ENCODE measurements at regions of chr9 and their contacts with region 1.

Region 1: DNA sequence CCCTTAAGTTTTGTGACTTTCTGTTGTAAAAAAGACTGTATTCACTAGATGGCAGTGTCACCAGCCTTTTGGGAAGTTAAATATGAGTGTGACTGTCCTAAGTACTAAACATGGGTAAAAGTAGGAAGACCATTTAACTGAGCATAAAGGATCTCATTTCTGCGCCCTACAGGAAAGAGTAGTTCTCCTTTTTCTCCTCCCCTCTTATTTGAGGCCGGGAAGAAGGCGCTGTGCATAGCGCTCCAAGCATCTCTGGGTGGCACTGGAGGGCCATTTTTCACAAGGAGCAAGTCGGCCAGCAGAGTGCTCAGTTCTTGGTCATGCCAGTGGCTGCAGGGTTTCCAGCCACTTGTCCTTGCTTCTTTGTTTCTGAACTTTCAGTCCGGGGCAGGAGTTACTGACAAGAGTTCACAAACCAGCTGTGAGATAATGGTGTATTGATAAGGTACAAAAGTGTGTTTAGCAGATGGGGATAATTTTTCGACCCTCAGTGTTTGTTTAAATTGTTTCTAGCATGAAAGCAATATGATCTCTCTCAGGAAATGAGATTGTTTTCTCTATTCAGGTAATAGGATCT is 227.6 kb upstream of the DMRT1 start:
- DNase-seq: peak; percentile 55 to 94
- H3K4me3 ChIP-seq: no peak overlapping the region
- H3K27ac ChIP-seq: peak overlapping the region; percentile 86 to 88
- H3K4me1 ChIP-seq: peaks cover 10 to 25% of the 10 kb centered on the region in 2 donors
- H3K27me3 ChIP-seq: no peaks in the 10 kb centered on the region
- CTCF ChIP-seq: peak; percentile 79 to 88 (median 82)

Region 2: DNA sequence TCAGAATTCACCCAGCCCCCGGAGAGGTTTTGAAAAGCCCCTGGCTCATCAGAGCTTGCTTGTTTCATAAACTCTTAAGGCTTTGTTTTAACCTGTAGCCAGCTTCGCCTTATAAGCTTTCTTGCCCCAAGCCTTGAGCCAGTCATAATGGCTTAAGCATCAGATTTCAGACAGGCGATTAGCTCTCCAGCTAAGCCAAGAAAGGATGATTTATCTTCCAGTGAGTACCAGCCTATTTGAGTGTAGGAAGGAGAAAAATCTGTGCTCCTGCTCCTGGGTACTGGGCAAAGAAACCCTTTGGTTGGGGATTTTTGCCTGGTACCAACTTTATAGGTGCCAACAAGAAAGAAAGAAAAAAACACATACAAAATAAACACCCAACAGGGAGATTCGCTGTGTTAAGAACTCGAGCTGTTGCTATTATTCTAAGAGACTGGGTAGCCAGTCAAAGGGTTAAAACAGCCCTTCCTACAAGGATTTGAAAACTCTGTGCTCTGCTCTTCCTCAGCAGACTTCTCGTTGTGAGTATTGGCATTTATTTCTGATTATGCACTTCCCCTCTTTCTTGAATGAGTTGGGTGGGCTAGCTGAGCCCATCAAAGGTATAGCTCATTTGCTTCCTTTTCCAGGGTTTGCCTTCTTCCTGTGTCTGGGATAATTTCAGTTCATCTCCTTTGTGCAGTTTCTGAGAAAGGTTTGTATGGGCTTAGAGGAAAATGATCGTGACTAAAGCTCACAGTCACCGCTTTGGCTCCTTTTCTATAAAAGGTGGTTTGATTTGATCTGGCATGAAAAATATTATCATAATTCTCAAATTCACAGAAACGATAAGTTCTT is 70.4 kb after region 1 on chr9:
- intact Hi-C with region 1: loop called (anchors 2 kb)
- DNase-seq: no peak
- H3K4me3 ChIP-seq: peak overlapping the region; percentile 39 to 59
- H3K27ac ChIP-seq: peak overlapping the region; percentile 86 to 95
- H3K4me1 ChIP-seq: peaks cover 5 to 34% of the 10 kb centered on the region in 2 donors
- H3K27me3 ChIP-seq: no peaks in the 10 kb centered on the region
- CTCF ChIP-seq: no peak

Region 3: DNA sequence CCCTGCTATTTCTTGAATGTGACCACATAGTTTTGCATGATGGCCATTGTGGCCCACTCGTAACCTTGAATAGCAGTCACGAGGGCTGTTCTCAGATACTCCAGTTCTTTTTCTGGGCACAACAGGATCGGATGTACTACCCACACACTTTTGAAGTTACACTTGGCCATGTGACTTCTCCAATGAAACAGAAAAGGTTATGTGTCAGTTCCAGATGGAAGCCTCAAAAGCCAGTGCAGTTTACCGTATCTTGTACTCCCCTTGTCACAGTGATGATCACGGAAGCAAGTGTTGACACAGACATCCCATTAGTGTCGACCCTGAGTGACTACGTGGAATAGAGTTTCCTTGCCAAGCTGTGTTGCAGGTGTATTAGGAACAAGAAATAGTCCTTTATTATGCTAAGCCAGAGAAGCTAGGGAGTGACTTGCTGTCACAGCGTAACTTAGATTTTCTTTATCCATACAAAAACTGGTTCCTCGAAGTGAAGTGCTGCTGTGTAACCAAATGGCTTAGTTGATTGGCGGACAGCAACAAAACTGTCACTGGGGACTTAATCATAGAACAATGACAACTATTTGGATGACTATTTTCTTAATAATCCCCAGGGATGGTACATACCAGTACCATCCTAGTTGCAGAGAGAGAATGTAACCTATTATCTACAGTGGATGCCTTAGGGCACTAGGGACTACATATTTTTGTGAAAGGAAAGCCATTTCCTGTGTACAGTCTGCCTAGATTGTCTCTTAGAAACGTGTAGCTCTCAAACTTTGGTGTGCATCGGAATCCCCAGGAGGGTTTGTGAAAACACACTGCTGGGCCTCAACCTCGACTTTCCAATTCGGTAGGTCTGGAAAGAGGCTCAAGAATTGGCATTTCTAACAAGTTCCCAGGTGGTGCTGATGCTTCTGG is 137.5 kb after region 1 on chr9:
- intact Hi-C with region 1: loop called (anchors 2 kb)
- DNase-seq: no peak
- H3K4me3 ChIP-seq: peak overlapping the region in 1 of 2 donors; percentile 37
- H3K27ac ChIP-seq: peak overlapping the region; percentile 92 to 95
- H3K4me1 ChIP-seq: peaks cover 25 to 45% of the 10 kb centered on the region in 2 donors
- H3K27me3 ChIP-seq: no peaks in the 10 kb centered on the region
- CTCF ChIP-seq: no peak

Region 4: GRCh38 chr9:806285-807156 is 192.7 kb after region 1 on chr9:
- intact Hi-C with region 1: loop called (anchors 1 kb)
- DNase-seq: no peak
- H3K4me3 ChIP-seq: no peak overlapping the region
- H3K27ac ChIP-seq: no peak overlapping the region
- H3K4me1 ChIP-seq: peaks cover 0 to under 1% of the 10 kb centered on the region in 2 donors
- H3K27me3 ChIP-seq: no peaks in the 10 kb centered on the region
- CTCF ChIP-seq: peak; percentile 31 to 77 (median 62)